PC-9 (cell line): ENCODE measurements at regions of chr14 and their contacts with region 1.

Region 1: DNA sequence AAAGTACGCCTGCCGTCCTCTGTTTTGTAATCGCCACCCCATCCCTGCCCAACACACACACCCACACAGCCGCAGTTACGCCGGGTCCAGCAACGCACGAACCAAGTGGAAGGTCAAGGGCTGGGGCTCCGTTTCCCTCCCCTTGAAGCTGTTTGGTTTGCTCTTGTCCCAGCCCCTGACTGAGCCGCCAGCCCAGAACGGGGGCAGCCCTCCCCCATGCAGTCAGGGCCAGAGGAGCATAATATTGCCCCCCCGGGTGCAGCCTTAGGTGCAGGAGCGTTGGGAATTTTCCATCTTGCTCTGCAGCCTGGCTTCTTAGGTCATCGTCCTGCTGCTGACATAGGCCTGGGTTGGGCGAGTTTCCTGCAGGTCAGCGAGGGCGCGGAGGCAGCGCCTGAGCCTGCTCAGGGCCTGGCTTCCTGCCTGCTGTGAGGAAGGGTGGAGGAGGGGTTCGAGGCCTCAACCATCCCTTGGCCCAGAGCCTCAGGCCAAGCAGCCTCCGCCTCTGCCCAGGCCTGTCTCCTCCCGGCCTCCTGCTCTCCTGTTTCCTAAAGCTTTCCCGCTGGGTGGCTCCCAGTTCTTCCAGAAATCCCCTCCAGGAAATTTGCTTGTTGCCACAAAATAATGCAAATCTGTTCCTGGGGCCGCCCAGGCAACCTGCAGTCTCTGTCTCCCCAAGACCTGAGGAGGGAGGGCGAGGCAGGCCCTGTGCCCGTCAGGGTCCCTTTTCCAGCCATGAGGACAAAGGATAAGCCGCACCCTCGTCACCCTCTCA is 44.5 kb downstream of the PSMA6 start:
- DNase-seq: peak; percentile 90 to 92
- H3K4me3 ChIP-seq: peak overlapping the region; percentile 38; the same call in 1 of the 2 replicates
- H3K27ac ChIP-seq: peak overlapping the region; percentile 92
- H3K4me1 ChIP-seq: peaks cover 79% of the 10 kb centered on the region
- H3K27me3 ChIP-seq: no peaks in the 10 kb centered on the region
- CTCF ChIP-seq: no peak

Region 2: DNA sequence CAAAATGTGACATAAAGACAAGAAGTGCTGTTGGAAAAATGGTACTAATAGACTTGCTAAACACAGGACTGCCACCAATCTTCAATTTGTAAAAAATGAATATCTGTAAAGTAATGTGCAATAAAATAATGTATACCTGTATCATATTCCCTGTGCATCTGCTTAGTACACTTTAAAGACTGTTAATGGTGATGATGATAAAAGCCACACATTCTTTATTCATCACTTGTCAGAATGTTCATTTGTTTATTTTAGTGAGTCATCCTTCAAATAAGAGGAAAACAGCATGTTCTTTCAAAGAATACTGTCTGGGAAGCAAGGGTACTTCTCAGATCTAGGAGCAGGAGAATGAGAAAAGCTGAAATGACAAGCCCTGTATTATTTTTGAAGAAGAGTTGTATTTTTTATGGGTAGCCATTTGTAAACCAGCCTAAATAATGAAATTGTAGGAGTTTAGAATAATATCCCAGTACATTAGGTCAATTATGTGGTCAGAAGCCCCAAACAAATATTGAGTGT is 122.8 kb before region 1 on chr14:
- CTCF ChIA-PET with region 1: no interaction called
- POLR2A ChIA-PET with region 1: no interaction called
- intact Hi-C with region 1: no loop called
- DNase-seq: peak in 1 of 2 experiments; percentile 72
- H3K4me3 ChIP-seq: no peak overlapping the region
- H3K27ac ChIP-seq: no peak overlapping the region
- H3K4me1 ChIP-seq: peaks cover 10% of the 10 kb centered on the region
- H3K27me3 ChIP-seq: no peaks in the 10 kb centered on the region
- CTCF ChIP-seq: no peak

Region 3: DNA sequence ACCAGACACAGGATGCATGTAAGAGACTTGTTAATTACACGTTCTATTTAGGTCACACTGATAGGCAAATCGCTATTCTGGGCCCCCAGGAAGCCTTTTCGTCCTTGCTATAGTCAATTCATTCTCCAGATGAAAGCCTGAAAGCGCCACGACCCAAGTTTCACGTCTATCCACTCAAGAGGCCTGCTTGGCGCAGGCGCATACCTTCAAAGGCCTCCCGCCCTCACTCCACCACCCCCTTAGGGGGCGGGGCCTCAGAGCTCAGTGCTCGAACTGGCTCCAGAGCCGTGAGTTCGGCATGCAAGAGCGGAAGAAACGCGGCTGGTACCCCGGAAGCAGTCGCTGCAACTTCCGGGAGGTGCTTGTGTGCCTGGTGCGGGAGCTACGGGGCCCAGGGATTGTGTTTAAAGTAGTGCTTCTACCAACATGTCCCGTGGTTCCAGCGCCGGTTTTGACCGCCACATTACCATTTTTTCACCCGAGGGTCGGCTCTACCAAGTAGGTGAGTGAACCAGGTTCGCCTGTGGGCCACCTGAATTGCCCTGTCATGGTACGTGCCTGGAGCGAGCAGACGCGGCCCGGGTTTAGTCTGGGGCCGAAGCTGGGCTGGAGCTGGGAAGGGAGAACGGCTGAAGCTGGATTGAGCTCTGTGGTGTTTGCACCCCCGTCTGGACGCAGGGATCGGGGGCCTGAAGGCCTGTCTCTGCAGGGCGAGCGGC is 44.5 kb before region 1 on chr14 and contains the start of gene PSMA6:
- CTCF ChIA-PET with region 1: no interaction called
- POLR2A ChIA-PET with region 1: interaction called, 5 read pairs
- intact Hi-C with region 1: loop called (anchors 2 kb)
- DNase-seq: peak; percentile 94 to 95
- H3K4me3 ChIP-seq: peak within 1 kb of the TSS; percentile 94
- H3K27ac ChIP-seq: peak within 1 kb of the TSS; percentile 67
- H3K4me1 ChIP-seq: peaks cover 21% of the 10 kb centered on the region
- H3K27me3 ChIP-seq: no peaks in the 10 kb centered on the region
- CTCF ChIP-seq: no peak
- total RNA-seq, gene PSMA6: 118 and 188 TPM in 2 replicates

Region 4: DNA sequence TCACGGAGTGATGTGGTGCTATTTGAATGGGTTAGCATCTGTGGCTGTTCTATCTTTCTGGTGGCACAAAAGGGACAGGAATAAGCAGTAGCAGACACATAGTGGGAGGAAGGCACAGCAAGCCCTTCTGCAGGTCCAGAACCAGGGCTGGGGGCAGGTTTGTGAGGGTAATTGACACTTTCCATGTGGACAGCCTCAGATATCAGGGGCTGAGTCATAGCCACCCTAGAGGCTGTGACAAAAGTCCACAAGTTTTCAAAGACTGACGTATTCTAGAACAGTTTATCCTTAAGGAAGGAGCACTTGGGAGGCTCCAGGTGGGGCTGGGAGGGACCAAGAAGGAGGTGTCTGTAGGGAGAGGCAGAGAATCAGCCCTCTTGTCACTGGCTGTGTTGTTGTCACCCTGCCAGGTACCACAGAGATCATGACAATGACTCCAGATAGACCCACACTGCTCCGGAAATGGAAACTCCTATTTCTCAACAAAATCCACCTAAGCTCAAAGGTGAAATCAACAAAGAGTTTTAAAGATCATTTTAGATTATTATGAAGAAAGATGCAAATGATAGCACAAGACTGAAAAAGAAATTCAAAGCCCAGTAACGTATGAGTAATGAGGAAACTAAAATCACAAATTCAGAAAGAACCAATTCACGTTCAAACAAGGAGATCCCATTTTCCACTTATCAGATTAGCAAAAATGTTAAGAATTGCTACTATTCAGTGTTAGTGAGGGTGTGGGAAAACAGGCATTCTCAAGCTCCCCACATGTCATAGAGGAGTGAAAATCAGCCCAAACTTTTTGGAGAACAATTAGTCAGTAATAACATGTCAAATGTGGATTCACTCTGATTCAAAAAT is 19.5 kb after region 1 on chr14:
- CTCF ChIA-PET with region 1: no interaction called
- POLR2A ChIA-PET with region 1: no interaction called
- intact Hi-C with region 1: loop called (anchors 1 kb)
- DNase-seq: peak; percentile 76 to 89
- H3K4me3 ChIP-seq: peak overlapping the region; percentile 30; the same call in 1 of the 2 replicates
- H3K27ac ChIP-seq: peak overlapping the region; percentile 86
- H3K4me1 ChIP-seq: peaks cover 51% of the 10 kb centered on the region
- H3K27me3 ChIP-seq: no peaks in the 10 kb centered on the region
- CTCF ChIP-seq: no peak

Region 5: DNA sequence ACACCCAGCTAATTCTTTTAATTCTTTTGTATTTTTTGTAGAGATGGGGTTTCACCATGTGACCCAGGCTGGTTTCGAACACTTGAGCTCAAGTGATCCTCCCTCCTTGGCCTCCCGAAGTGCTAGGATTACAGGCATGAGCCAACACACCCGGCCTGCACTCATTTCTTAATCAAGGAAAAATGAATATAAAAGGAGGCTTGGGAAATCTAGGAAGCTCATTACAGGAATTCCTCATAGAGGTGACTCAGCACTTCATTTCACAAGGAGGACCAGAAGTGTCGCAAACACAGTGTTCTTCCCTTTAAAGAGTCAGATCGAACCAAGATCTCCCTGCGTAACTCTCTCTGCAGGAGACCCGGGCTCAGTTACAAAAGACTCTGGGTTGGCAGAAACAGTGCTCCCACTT is 37.6 kb after region 1 on chr14:
- CTCF ChIA-PET with region 1: no interaction called
- POLR2A ChIA-PET with region 1: no interaction called
- intact Hi-C with region 1: loop called (anchors 5 kb)
- DNase-seq: peak; percentile 49 to 92
- H3K4me3 ChIP-seq: no peak overlapping the region
- H3K27ac ChIP-seq: peak overlapping the region; percentile 72
- H3K4me1 ChIP-seq: peaks cover 21% of the 10 kb centered on the region
- H3K27me3 ChIP-seq: no peaks in the 10 kb centered on the region
- CTCF ChIP-seq: no peak

Region 6: DNA sequence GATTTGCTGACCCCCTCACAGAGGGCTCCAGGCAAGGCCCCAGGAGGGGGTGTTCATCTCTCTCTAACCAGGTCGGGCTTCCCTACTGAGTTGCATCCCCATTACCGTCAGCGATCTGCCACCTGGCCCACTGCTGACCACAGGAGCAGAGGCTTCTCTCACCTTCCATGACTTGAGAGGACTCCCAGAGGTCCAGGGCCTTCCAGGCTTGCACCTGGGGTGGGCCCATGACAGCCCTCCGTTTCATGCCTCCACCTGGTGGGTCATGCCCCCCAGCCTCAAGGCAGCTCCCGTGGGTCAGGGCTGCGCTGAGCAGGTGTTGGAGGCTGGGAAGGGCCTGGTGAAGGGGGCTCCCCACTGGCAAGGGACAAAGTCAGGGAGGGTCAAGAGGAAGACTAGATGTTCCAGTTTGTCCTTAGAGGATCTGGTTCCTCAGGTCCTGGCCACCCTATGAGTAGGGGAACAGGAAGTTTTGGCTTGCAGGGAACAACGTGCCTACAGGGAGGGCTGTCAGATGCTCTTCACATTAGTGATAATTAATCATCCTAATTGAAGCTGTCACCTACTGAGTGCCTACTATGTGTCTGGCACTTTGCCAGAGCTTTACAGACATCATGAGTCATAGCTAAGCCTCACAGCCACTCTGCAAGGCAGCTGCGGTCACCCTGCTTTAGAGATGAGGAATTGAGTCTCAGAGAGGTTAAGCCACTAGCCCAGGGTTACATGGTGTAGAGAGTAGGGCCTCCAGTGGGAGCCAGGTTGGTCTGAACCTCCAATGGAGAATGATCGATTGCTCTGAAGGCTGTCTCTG is 54.1 kb after region 1 on chr14:
- CTCF ChIA-PET with region 1: no interaction called
- POLR2A ChIA-PET with region 1: interaction called, 5 read pairs
- intact Hi-C with region 1: loop called (anchors 1 kb)
- DNase-seq: peak; percentile 63 to 92
- H3K4me3 ChIP-seq: no peak overlapping the region
- H3K27ac ChIP-seq: peak overlapping the region; percentile 50
- H3K4me1 ChIP-seq: peaks cover 14% of the 10 kb centered on the region
- H3K27me3 ChIP-seq: no peaks in the 10 kb centered on the region
- CTCF ChIP-seq: no peak

Region 7: GRCh38 chr14:35425850-35426249 is 89.2 kb after region 1 on chr14:
- CTCF ChIA-PET with region 1: no interaction called
- POLR2A ChIA-PET with region 1: interaction called, 18 read pairs
- intact Hi-C with region 1: no loop called
- DNase-seq: no peak
- H3K4me3 ChIP-seq: no peak overlapping the region
- H3K27ac ChIP-seq: no peak overlapping the region
- H3K4me1 ChIP-seq: no peaks in the 10 kb centered on the region
- H3K27me3 ChIP-seq: no peaks in the 10 kb centered on the region
- CTCF ChIP-seq: no peak